ENCODE measurements at regions of chr20 and their contacts with region 1.

Region 1: DNA sequence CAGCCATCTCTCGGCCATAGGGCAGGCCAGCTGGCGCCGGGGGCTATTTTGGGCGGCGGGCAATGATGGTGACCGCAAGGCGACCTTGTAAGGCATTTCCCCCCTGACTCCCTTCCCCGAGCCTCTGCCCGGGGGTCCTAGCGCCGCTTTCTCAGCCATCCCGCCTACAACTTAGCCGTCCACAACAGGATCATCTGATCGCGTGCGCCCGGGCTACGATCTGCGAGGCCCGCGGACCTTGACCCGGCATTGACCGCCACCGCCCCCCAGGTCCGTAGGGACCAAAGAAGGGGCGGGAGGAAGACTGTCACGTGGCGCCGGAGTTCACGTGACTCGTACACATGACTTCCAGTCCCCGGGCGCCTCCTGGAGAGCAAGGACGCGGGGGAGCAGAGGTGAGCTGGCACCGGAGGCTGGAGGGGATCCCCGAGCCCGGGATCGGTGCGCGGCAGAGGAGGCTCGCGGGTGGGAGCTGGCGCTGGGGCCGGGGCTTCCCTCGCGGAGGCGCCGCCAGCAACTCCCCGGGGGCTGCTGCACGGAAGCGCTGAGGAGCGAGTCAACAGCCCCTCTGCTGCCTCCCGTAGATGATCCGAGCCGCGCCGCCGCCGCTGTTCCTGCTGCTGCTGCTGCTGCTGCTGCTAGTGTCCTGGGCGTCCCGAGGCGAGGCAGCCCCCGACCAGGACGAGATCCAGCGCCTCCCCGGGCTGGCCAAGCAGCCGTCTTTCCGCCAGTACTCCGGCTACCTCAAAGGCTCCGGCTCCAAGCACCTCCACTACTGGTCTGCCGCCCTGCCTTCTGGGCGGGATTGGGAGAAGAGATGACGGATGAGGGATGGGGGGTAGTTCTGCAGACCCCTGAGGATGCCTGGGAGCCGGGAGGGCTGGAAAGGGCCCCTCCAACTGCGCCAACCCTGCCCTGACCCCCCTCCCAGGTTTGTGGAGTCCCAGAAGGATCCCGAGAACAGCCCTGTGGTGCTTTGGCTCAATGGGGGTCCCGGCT is at the starts of genes CTSA and NEURL2:
- DNase-seq: peak; percentile 72 to 92 (median 82)
- ATAC-seq: peak; percentile 80 to 86
- H3K4me3 Mint-ChIP-seq: peak within 1 kb of the TSS; percentile 92 to 96 (median 94)
- H3K27ac Mint-ChIP-seq: peak within 1 kb of the TSS; percentile 88 to 96 (median 94)
- H3K4me1 Mint-ChIP-seq: peaks cover 15 to 50% (median 43%) of the 10 kb centered on the region in 4 donors
- H3K27me3 Mint-ChIP-seq: no peaks in the 10 kb centered on the region
- polyA plus RNA-seq, gene CTSA: 79.5 to 128 (median 90.5) TPM
- polyA plus RNA-seq, gene NEURL2: 0.53 to 2.2 (median 1.8) TPM

Region 2: GRCh38 chr20:45857114-45857881 is 34.0 kb before region 1 on chr20 and contains the starts of genes ACOT8 and ZSWIM3:
- POLR2A ChIA-PET with region 1: interaction called, 31 read pairs
- DNase-seq: peak; percentile 68 to 99 (median 96)
- ATAC-seq: peak; percentile 97
- H3K4me3 Mint-ChIP-seq: peak within 1 kb of the TSS; percentile 94 to 97 (median 96)
- H3K27ac Mint-ChIP-seq: peak within 1 kb of the TSS; percentile 96 to 99 (median 98)
- H3K4me1 Mint-ChIP-seq: peaks cover 21 to 62% (median 58%) of the 10 kb centered on the region in 4 donors
- H3K27me3 Mint-ChIP-seq: no peaks in the 10 kb centered on the region
- polyA plus RNA-seq, gene ACOT8: 37.5 to 46.2 (median 38.4) TPM
- polyA plus RNA-seq, gene ZSWIM3: 0.35 to 2.1 (median 0.65) TPM

Region 3: GRCh38 chr20:45880988-45881788 is 10.1 kb before region 1 on chr20 and contains the start of gene ZSWIM1:
- POLR2A ChIA-PET with region 1: interaction called, 40 read pairs
- DNase-seq: peak; percentile 91 to 99 (median 98)
- ATAC-seq: peak; percentile 99 to 100
- H3K4me3 Mint-ChIP-seq: peak within 1 kb of the TSS; percentile 87 to 96 (median 91)
- H3K27ac Mint-ChIP-seq: peak within 1 kb of the TSS; percentile 86 to 98 (median 96)
- H3K4me1 Mint-ChIP-seq: peaks cover 20 to 45% (median 39%) of the 10 kb centered on the region in 4 donors
- H3K27me3 Mint-ChIP-seq: no peaks in the 10 kb centered on the region
- polyA plus RNA-seq, gene ZSWIM1: 0.96 to 9.8 (median 1.7) TPM

Region 4: GRCh38 chr20:45924391-45925261 is 33.3 kb after region 1 on chr20:
- POLR2A ChIA-PET with region 1: interaction called, 10 read pairs
- DNase-seq: no peak
- ATAC-seq: no peak
- H3K4me3 Mint-ChIP-seq: no peak overlapping the region
- H3K27ac Mint-ChIP-seq: peak overlapping the region in 1 of 10 donors; percentile 8
- H3K4me1 Mint-ChIP-seq: peaks cover 0 to 8% (median 5%) of the 10 kb centered on the region in 4 donors
- H3K27me3 Mint-ChIP-seq: peaks cover 0 to 13% (median 6%) of the 10 kb centered on the region in 5 donors

Region 5: GRCh38 chr20:45971675-45972499 is 80.6 kb after region 1 on chr20 and contains the start of gene ZNF335:
- POLR2A ChIA-PET with region 1: interaction called, 25 read pairs
- DNase-seq: peak; percentile 86 to 100 (median 94)
- ATAC-seq: peak; percentile 79 to 83
- H3K4me3 Mint-ChIP-seq: peak within 1 kb of the TSS; percentile 89 to 98 (median 95)
- H3K27ac Mint-ChIP-seq: peak within 1 kb of the TSS; percentile 99 to 100 (median 100)
- H3K4me1 Mint-ChIP-seq: peaks cover 12 to 26% (median 23%) of the 10 kb centered on the region in 4 donors
- H3K27me3 Mint-ChIP-seq: peaks cover 0 to 5% (median 0%) of the 10 kb centered on the region in 5 donors
- polyA plus RNA-seq, gene ZNF335: 6.4 to 13.2 (median 7.8) TPM